CD4-positive, alpha-beta T cell (primary cell): ENCODE measurements at regions of chr2 and their contacts with region 1.

Region 1: GRCh38 chr2:27211829-27212627 is at the starts of genes ATRAID and SLC5A6:
- DNase-seq: peak; percentile 76 to 95 (median 86)
- ATAC-seq: peak; percentile 83
- H3K4me3 ChIP-seq: peak within 1 kb of the TSS; percentile 78
- H3K4me3 Mint-ChIP-seq: peak within 1 kb of the TSS; percentile 98
- H3K27ac ChIP-seq: peak within 1 kb of the TSS; percentile 96 to 97
- H3K27ac Mint-ChIP-seq: peak within 1 kb of the TSS; percentile 98
- H3K4me1 ChIP-seq: peaks cover 26% of the 10 kb centered on the region
- H3K4me1 Mint-ChIP-seq: peaks cover 40% of the 10 kb centered on the region
- H3K27me3 ChIP-seq: no peaks in the 10 kb centered on the region
- H3K27me3 Mint-ChIP-seq: no peaks in the 10 kb centered on the region
- CTCF ChIP-seq: no peak
- total RNA-seq, gene ATRAID: 79.1 to 82.5 TPM
- total RNA-seq, gene SLC5A6: 196 to 207 TPM

Region 2: DNA sequence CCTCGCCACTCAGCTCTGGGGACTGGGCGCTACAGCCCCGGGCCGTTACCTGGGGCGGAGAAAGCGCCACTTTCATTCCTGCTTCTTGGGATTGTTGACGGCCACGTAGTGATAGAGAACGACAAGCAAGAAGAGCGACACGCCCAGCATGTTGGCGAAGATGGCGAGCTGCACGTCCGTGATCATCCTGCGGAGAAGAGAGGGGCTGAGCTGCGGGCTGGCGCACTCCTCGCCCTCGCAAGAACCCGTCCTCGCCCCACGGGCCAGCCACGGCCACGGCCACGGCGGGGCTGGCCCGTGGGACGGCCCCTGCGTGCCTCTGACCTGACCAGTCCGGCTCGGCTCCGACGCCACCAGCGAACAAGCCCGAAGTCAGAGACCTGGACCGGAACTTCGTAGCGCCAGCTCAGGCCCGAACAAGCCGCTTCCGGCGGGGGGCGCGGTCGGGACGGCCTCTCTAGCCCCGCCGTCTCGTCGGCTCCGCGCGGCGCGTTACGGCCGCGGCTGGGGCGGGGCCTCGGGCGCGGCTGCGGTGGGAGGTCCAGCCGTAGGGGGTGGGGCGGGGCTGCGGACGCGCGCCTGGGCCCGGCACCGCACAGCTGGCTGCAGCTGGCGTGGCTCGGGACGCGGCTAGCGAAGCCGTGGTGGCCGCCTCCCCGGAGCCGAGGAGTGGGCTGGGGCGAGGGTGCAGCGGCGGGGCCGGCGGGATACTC is 140.6 kb before region 1 on chr2 and contains the start of gene OST4:
- CTCF ChIA-PET with region 1: no interaction called
- POLR2A ChIA-PET with region 1: interaction called, 6 read pairs
- intact Hi-C with region 1: loop called in 1 of 2 experiments (anchors 5 kb)
- DNase-seq: peak; percentile 76 to 95 (median 86)
- ATAC-seq: peak; percentile 86
- H3K4me3 ChIP-seq: peak within 1 kb of the TSS; percentile 99
- H3K4me3 Mint-ChIP-seq: peak within 1 kb of the TSS; percentile 99
- H3K27ac ChIP-seq: peak within 1 kb of the TSS; percentile 90 to 91
- H3K27ac Mint-ChIP-seq: peak within 1 kb of the TSS; percentile 98
- H3K4me1 ChIP-seq: peaks cover 74% of the 10 kb centered on the region
- H3K4me1 Mint-ChIP-seq: peaks cover 84% of the 10 kb centered on the region
- H3K27me3 ChIP-seq: no peaks in the 10 kb centered on the region
- H3K27me3 Mint-ChIP-seq: no peaks in the 10 kb centered on the region
- CTCF ChIP-seq: no peak
- total RNA-seq, gene OST4: 232 to 254 TPM

Region 3: DNA sequence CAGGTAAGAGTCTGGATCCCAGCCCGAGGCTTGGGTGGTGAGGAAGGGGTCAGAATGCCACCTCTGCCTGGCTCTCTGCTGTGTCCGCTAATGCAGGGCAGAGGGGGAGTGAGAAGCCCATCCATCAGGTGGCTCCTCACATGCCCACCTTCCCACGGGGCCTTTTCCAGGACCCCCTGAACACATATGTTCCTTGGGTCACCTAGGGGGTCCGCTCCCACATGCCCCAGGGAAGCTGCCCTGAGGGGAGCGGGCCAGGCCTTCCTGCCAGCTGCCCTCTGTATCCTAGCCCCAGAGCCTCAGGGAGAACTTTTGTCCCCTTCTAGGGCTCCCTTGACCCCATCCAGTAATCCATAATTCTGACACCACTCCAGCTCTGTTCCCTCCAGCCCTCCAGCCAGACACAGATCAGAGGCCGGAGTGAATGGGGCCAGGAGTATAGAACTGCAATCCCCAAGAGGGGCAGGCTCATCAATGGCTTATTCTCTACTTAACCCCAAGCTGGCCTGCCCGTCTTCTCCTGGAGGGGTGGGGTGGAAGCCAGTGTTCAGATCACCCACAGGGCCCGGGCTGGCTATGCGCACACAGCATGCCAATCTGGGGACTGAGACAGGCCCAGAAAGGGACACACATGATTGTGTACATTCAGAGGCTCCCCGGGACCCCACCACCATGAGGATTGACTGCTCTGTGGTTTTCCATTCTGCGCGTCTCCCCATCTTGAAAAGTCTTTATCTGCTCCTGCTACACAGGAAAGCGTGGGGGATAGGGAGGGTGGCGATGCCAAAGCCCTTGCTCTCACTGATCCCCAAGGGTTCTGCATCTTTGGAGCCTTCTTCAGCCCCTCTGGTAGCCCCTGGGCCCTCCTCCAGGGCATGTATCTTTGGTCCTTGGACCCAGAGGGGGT is 132.5 kb before region 1 on chr2:
- CTCF ChIA-PET with region 1: no interaction called
- POLR2A ChIA-PET with region 1: interaction called, 11 read pairs
- intact Hi-C with region 1: loop called (anchors 2 to 5 kb)
- DNase-seq: no peak
- ATAC-seq: no peak
- H3K4me3 ChIP-seq: no peak overlapping the region
- H3K4me3 Mint-ChIP-seq: no peak overlapping the region
- H3K27ac ChIP-seq: no peak overlapping the region
- H3K27ac Mint-ChIP-seq: no peak overlapping the region
- H3K4me1 ChIP-seq: peaks cover 44% of the 10 kb centered on the region
- H3K4me1 Mint-ChIP-seq: peaks cover 46% of the 10 kb centered on the region
- H3K27me3 ChIP-seq: no peaks in the 10 kb centered on the region
- H3K27me3 Mint-ChIP-seq: no peaks in the 10 kb centered on the region
- CTCF ChIP-seq: no peak

Region 4: DNA sequence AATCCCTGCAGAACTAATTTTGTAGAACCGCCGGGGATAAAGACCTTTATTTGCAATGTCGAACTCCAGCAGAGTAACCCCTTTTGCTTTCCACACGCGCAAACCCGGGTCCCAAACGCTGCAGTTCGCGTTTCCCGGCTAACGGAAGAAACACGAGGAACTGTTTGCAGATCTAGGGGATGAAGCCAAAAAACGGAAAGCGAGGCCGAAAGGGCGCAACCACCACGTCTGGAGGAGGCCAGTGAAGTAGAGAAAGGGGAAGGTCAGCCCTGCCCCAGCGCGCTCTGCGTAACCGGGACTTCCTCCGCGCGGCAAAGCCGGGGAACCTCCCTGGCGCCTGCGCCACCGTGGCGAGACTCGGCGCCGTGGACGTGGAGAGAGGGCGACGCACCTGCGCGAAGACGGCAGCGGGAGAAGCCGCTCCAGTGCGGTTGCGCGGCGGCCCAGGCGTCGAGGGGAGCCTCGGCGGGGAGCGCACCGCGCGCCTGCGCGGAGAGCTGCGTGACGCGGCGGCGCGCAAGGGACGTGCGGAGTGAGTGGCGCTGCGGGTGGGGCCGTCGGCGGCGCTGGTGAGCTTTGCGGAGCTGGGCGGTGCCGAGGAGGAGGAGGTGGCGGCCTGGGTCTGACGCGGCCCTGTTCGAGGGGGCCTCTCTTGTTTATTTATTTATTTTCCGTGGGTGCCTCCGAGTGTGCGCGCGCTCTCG is 1539.4 kb after region 1 on chr2 and contains the start of gene PPP1CB:
- CTCF ChIA-PET with region 1: no interaction called
- POLR2A ChIA-PET with region 1: no interaction called
- intact Hi-C with region 1: no loop called
- DNase-seq: peak; percentile 91 to 100 (median 96)
- ATAC-seq: peak; percentile 84
- H3K4me3 ChIP-seq: peak within 1 kb of the TSS; percentile 92
- H3K4me3 Mint-ChIP-seq: peak within 1 kb of the TSS; percentile 95
- H3K27ac ChIP-seq: peak within 1 kb of the TSS; percentile 98
- H3K27ac Mint-ChIP-seq: peak within 1 kb of the TSS; percentile 95
- H3K4me1 ChIP-seq: peaks cover 56% of the 10 kb centered on the region
- H3K4me1 Mint-ChIP-seq: peaks cover 73% of the 10 kb centered on the region
- H3K27me3 ChIP-seq: no peaks in the 10 kb centered on the region
- H3K27me3 Mint-ChIP-seq: no peaks in the 10 kb centered on the region
- CTCF ChIP-seq: peak; percentile 32
- total RNA-seq, gene PPP1CB: 290 to 304 TPM